Sciatic nerve (tissue), 2 donors: ENCODE measurements at regions of chr17 and their contacts with region 1.

Region 1: GRCh38 chr17:77280980-77281903 is 140.5 kb downstream of the SEC14L1 start:
- DNase-seq: peak; percentile 72
- ATAC-seq: peak; percentile 34

Region 2: GRCh38 chr17:75764711-75765421 is 1516.4 kb before region 1 on chr17 and contains the start of gene GALK1:
- intact Hi-C with region 1: loop called (anchors 5 kb)
- DNase-seq: peak; percentile 88
- ATAC-seq: peak; percentile 84
- total RNA-seq, gene GALK1: 23.7 TPM